WTC11 (cell line): ENCODE measurements at regions of chr2 and their contacts with region 1.

Region 1: DNA sequence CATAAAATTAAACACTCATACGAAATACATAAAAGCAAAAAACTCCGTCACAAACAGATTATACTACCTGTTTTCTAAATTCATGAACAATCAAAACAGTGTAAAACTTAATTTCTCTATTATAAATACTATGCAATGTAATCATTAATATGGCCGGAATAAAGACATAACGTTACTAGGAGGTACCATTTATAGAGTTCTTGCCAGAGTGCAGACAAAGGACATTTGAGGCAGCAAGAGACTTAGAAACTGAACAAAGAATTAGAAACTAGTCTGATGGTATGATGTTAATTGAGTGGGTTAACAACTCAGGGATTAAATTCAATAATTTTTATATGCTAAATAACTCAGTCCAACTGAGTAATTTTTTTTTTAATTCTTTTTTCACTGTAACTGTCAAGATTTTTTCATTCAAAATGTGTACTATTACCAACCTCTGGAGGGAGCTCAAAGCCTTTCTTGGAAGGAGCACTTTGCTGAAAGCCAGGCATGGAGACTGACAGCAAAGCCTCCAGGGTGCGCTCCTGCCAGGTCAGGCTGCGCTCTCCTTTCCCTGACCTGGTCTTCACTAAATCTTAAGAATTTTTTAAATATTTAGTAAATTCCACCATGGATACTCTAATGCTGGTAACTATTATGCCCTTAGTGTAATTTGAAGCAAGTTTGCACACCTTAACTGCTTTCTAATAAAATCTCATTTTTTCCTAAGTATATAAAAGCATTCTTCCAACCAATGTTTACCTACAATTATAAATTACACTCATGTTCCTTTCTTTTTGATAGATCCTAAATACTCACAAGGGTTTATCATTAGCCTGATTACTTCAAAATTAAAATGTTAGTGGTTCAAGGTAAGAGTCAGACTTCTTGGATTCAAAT is 34.1 kb downstream of the WDR35 start:
- DNase-seq: peak; percentile 59
- ATAC-seq: peak; percentile 100
- H3K4me3 Mint-ChIP-seq: no peak overlapping the region
- H3K27ac Mint-ChIP-seq: no peak overlapping the region
- H3K4me1 Mint-ChIP-seq: no peaks in the 10 kb centered on the region
- H3K27me3 Mint-ChIP-seq: no peaks in the 10 kb centered on the region
- CTCF ChIP-seq: peak; percentile 50; the same call in 1 of the 2 replicates

Region 2: GRCh38 chr2:19819097-19820065 is 136.4 kb before region 1 on chr2:
- CTCF ChIA-PET with region 1: no interaction called
- POLR2A ChIA-PET with region 1: no interaction called
- DNase-seq: no peak
- ATAC-seq: no peak
- H3K4me3 Mint-ChIP-seq: no peak overlapping the region
- H3K27ac Mint-ChIP-seq: no peak overlapping the region
- H3K4me1 Mint-ChIP-seq: no peaks in the 10 kb centered on the region
- H3K27me3 Mint-ChIP-seq: no peaks in the 10 kb centered on the region
- CTCF ChIP-seq: no peak

Region 3: DNA sequence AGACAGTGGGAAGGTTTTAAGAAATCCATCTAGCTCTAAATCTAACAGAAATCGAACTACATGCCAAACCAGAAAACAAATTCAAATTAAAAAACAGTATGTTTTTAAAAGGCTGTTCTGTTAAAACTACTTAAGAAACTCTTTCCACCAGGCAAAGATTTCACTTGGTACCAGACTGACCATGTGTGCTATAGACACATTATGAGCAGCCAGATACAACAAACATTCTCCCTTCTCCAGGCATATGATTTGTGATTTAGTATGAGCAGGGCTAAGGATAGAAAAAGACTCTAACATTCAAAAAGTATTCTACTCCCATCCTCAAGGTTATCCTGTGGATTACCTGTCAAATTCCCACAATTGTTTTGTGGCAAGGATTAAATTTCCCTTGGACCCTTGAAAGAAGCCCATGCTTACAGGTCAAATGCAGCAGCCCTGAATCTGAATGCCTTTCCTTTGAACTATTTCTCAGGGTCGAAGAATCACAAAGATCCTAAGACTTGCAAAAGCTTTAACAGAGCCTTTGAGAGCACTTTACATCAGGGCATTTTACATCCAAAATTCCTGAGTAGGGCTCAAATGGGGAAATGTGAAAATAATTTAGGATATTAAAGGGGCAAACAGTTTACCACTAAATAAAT is 11.5 kb before region 1 on chr2:
- CTCF ChIA-PET with region 1: interaction called, 17 read pairs
- POLR2A ChIA-PET with region 1: no interaction called
- DNase-seq: no peak
- ATAC-seq: peak; percentile 93
- H3K4me3 Mint-ChIP-seq: no peak overlapping the region
- H3K27ac Mint-ChIP-seq: peak overlapping the region; percentile 84; the same call in 1 of the 2 replicates
- H3K4me1 Mint-ChIP-seq: peaks cover 35% of the 10 kb centered on the region
- H3K27me3 Mint-ChIP-seq: no peaks in the 10 kb centered on the region
- CTCF ChIP-seq: no peak

Region 4: GRCh38 chr2:19971691-19972090 is 15.9 kb after region 1 on chr2:
- CTCF ChIA-PET with region 1: interaction called, 11 read pairs
- POLR2A ChIA-PET with region 1: no interaction called
- DNase-seq: no peak
- ATAC-seq: no peak
- H3K4me3 Mint-ChIP-seq: no peak overlapping the region
- H3K27ac Mint-ChIP-seq: no peak overlapping the region
- H3K4me1 Mint-ChIP-seq: no peaks in the 10 kb centered on the region
- H3K27me3 Mint-ChIP-seq: no peaks in the 10 kb centered on the region
- CTCF ChIP-seq: no peak

Region 5: DNA sequence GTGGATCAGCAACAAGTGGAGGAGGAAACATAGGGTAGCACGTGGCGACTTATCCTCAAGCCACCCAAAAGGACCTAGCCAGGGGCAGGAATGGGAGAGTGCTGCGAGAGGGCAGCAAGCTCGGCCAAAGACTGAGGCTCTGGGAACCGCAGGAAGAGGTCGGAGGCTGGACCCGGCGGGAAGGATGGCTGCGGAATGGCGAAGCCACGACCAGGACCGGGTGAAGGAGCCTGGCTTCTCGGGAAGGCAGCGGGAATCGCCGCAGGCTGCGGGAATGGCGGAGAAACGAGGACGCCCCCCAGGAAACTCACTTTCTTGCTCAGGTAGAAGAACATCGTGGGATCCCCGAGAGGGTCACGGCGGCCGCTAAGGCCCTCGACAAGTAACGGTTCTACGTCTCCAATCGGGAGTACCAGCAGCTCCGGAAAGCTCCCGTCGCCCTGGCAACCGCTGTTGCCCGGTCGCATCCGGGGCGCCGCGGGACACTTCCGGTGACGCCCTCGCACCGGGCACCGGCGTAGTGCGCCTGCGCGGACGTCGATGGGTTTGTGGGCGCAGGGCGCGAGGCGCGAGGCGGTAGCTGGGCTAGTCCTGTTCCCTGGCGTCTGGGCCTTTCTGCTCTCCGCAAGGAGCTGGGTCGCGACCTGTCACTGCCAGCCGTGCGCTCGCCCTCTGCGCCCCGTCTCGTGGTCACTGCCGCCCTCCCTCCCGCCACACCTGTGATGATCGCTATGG is 34.1 kb after region 1 on chr2 and contains the start of gene WDR35:
- CTCF ChIA-PET with region 1: interaction called, 25 read pairs
- POLR2A ChIA-PET with region 1: no interaction called
- DNase-seq: peak; percentile 96
- ATAC-seq: peak; percentile 95
- H3K4me3 Mint-ChIP-seq: peak within 1 kb of the TSS; percentile 92
- H3K27ac Mint-ChIP-seq: peak within 1 kb of the TSS; percentile 93
- H3K4me1 Mint-ChIP-seq: peaks cover 26% of the 10 kb centered on the region
- H3K27me3 Mint-ChIP-seq: peaks cover 2% of the 10 kb centered on the region; the same call in 1 of the 2 replicates
- CTCF ChIP-seq: no peak
- total RNA-seq, gene WDR35: 15.4 to 16.5 TPM (median 15.5 TPM) in 3 replicates

Region 6: DNA sequence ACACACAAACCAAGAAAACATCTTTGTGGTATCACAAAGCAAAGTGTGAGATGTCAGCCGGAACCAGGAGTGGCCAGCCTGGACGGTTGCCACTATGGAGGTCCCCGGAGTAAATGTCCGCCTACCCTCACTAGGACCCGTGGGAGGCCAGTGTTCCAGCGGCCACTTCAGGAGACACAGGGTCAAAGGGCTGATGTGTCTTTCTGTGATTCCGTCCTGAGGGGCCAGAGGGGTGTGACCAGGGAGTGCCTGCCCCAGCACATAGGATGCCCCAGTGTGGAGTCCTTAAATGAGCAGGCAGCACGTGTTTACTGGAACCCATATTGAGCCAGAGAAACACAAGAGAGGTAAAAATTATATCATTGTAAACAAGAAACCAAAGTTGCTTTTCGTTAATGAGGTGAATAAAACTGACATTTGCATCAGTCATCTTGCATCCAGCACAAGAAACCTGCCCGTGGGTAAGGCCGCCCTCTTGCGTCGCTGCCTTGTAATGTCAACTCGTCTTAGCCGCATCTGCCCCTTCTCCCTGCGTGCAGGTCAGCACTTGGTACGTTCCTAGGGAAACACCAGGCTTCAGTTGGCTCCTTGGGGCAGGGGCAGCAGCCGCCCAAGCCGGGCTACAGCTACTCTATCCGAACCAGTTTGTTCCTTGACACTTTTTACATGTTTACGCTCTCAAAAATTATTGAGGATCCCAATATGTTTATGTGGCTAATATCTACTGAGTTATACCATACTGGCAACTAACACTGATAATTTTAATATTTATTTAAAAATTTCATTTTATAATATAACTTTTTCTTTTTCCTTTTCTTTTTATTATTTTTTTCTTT is 142.3 kb after region 1 on chr2:
- CTCF ChIA-PET with region 1: interaction called, 27 read pairs
- POLR2A ChIA-PET with region 1: no interaction called
- DNase-seq: peak; percentile 88
- ATAC-seq: peak; percentile 89
- H3K4me3 Mint-ChIP-seq: no peak overlapping the region
- H3K27ac Mint-ChIP-seq: no peak overlapping the region
- H3K4me1 Mint-ChIP-seq: peaks cover 17% of the 10 kb centered on the region
- H3K27me3 Mint-ChIP-seq: peaks cover 10% of the 10 kb centered on the region
- CTCF ChIP-seq: peak; percentile 66